ENCODE measurements at regions of chr4 and their contacts with region 1.

Region 1: GRCh38 chr4:139554893-139555704 is 920 bp downstream of the SETD7 start:
- DNase-seq: peak; percentile 82
- H3K4me3 Mint-ChIP-seq: peak overlapping the region; percentile 97
- H3K27ac Mint-ChIP-seq: peak overlapping the region; percentile 98
- H3K4me1 Mint-ChIP-seq: peaks cover 47% of the 10 kb centered on the region
- H3K27me3 Mint-ChIP-seq: peaks cover 4% of the 10 kb centered on the region

Region 2: GRCh38 chr4:139301113-139301820 is 253.8 kb before region 1 on chr4 and contains the start of gene NAA15:
- intact Hi-C with region 1: loop called (anchors 2 kb)
- DNase-seq: peak; percentile 98
- H3K4me3 Mint-ChIP-seq: peak within 1 kb of the TSS; percentile 98
- H3K27ac Mint-ChIP-seq: peak within 1 kb of the TSS; percentile 99
- H3K4me1 Mint-ChIP-seq: peaks cover 48% of the 10 kb centered on the region
- H3K27me3 Mint-ChIP-seq: no peaks in the 10 kb centered on the region
- total RNA-seq, gene NAA15: 86.7 and 97.4 TPM in 2 replicates